HEK293 (cell line): ENCODE measurements at regions of chr14 and their contacts with region 1.

Region 1: GRCh38 chr14:85607651-85608081 is 77.7 kb downstream of the FLRT2 start:
- H3K4me3 ChIP-seq: no peak overlapping the region
- H3K27ac ChIP-seq: no peak overlapping the region
- H3K4me1 ChIP-seq: no peaks in the 10 kb centered on the region
- CTCF ChIP-seq: no peak

Region 2: GRCh38 chr14:85218982-85219381 is 388.7 kb before region 1 on chr14:
- CTCF ChIA-PET with region 1: interaction called, 10 read pairs
- POLR2A ChIA-PET with region 1: no interaction called
- H3K4me3 ChIP-seq: no peak overlapping the region
- H3K27ac ChIP-seq: no peak overlapping the region
- H3K4me1 ChIP-seq: peaks cover 12% of the 10 kb centered on the region; the same call in 1 of the 2 replicates
- CTCF ChIP-seq: no peak

Region 3: GRCh38 chr14:85333313-85333712 is 274.4 kb before region 1 on chr14:
- CTCF ChIA-PET with region 1: no interaction called
- POLR2A ChIA-PET with region 1: no interaction called
- H3K4me3 ChIP-seq: no peak overlapping the region
- H3K27ac ChIP-seq: no peak overlapping the region
- H3K4me1 ChIP-seq: no peaks in the 10 kb centered on the region
- CTCF ChIP-seq: no peak

Region 4: GRCh38 chr14:85542623-85543022 is 65.0 kb before region 1 on chr14:
- CTCF ChIA-PET with region 1: interaction called, 10 read pairs
- POLR2A ChIA-PET with region 1: no interaction called
- H3K4me3 ChIP-seq: no peak overlapping the region
- H3K27ac ChIP-seq: no peak overlapping the region
- H3K4me1 ChIP-seq: peaks cover 5% of the 10 kb centered on the region; the same call in 1 of the 2 replicates
- CTCF ChIP-seq: no peak